Stomach (tissue), 19 donors: ENCODE measurements at regions of chr3 and their contacts with region 1.

Region 1: GRCh38 chr3:65793495-65794199 is 245.1 kb downstream of the MAGI1 start:
- DNase-seq: no peak
- H3K4me3 ChIP-seq: no peak overlapping the region
- H3K27ac ChIP-seq: no peak overlapping the region
- H3K4me1 ChIP-seq: peaks cover 0 to 8% (median 3%) of the 10 kb centered on the region in 4 donors
- H3K27me3 ChIP-seq: no peaks in the 10 kb centered on the region
- CTCF ChIP-seq: no peak
- EP300 ChIP-seq: no peak
- POLR2A ChIP-seq: no peak

Region 2: DNA sequence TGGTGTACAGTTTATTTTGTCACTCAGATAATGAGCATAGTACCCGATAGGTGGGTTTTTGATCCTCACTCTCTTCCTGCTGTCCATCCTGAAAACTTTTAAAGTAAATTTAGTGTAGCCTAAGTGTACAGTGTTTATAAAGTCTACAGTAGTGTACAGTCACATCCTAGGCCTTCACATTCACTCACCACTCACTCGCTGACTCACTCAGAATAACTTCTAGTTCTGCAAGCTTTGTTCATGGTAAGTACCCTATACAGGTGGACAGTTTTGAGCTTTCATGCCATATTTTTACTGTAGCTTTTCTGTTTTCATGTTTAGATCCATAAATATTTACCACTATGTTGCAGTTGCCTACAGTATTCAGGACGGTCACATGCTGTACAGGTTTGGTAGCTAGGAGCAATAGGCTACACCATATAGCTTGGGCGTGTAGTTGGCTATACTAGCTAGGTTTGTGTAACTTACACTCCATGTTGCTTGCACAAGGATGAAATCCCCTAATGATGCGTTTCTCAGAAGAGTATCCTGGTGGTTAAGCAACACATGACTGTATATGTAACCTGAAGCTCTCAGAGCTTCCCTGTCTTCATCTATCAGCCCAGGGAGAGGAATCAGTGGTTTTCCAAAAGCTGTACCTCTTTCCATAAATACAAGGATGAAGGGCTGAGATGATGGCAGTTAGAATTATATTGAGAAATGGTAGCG is 339.6 kb after region 1 on chr3:
- intact Hi-C with region 1: loop called (anchors 5 kb)
- DNase-seq: no peak
- H3K4me3 ChIP-seq: no peak overlapping the region
- H3K27ac ChIP-seq: no peak overlapping the region
- H3K4me1 ChIP-seq: no peaks in the 10 kb centered on the region
- H3K27me3 ChIP-seq: no peaks in the 10 kb centered on the region
- CTCF ChIP-seq: no peak
- EP300 ChIP-seq: no peak
- POLR2A ChIP-seq: no peak